ENCODE measurements at regions of chr19 and their contacts with region 1.

Region 1: GRCh38 chr19:35375505-35376307 is 4.8 kb downstream of the GPR42 start:
- DNase-seq: no peak
- ATAC-seq: peak; percentile 36; the same call in 2 of the 3 replicates
- H3K4me3 ChIP-seq: no peak overlapping the region
- H3K27ac ChIP-seq: peak overlapping the region; percentile 51; the same call in 1 of the 2 replicates
- H3K4me1 ChIP-seq: peaks cover 31% of the 10 kb centered on the region
- H3K27me3 ChIP-seq: no peaks in the 10 kb centered on the region
- CTCF ChIP-seq: no peak
- EP300 ChIP-seq: no peak
- POLR2A ChIP-seq: no peak
- RAD21 ChIP-seq: no peak

Region 2: DNA sequence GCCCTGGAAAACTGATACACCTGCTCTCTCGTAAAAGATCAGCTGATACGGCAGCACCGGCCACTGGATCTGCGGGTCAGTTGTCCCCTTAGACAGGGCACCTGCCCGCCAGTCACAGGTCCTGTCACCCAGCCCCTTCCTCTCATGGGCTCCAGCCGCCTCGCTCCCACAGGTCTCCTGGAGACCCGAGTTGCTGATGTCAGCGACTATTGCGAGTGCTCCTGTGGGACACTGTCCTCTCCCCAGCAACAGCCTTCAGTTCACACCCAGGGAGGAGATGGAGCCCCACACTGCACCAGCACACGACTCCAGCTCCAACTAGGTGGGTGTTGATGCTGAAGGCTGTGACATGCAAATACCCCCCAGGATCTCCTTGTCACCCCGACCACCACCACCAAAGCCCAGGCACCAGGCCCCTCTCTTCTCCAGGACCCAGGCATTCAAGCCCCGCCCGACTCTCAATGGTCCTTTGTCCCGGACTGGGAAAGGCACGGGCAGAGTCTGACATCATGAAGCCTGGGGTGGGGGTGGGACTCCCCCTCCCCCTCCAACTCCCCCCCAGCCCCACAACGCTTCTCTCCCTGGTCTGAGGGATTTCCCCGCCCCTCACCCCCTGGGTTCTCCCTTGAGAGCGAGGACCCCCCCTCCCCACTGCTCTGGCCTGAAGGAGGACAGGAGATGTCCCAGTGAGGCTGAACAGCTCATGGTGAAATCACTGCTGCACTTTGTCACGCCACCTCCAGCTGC is 85.2 kb before region 1 on chr19:
- CTCF ChIA-PET with region 1: no interaction called
- POLR2A ChIA-PET with region 1: no interaction called
- RAD21 ChIA-PET with region 1: no interaction called
- SMC1A ChIA-PET with region 1: no interaction called
- in situ Hi-C with region 1: no loop called
- intact Hi-C with region 1: no loop called
- DNase-seq: no peak
- ATAC-seq: no peak
- H3K4me3 ChIP-seq: no peak overlapping the region
- H3K27ac ChIP-seq: no peak overlapping the region
- H3K4me1 ChIP-seq: peaks cover 1% of the 10 kb centered on the region
- H3K27me3 ChIP-seq: no peaks in the 10 kb centered on the region; a peak in 1 of 4 replicates
- CTCF ChIP-seq: no peak
- EP300 ChIP-seq: no peak
- POLR2A ChIP-seq: no peak
- RAD21 ChIP-seq: no peak

Region 3: GRCh38 chr19:35388277-35389054 is 12.8 kb after region 1 on chr19:
- CTCF ChIA-PET with region 1: interaction called, 4 read pairs
- POLR2A ChIA-PET with region 1: interaction called, 10 read pairs
- RAD21 ChIA-PET with region 1: interaction called, 3 read pairs
- SMC1A ChIA-PET with region 1: interaction called, 6 read pairs
- in situ Hi-C with region 1: no loop called
- intact Hi-C with region 1: no loop called
- DNase-seq: no peak
- ATAC-seq: no peak
- H3K4me3 ChIP-seq: no peak overlapping the region
- H3K27ac ChIP-seq: no peak overlapping the region
- H3K4me1 ChIP-seq: no peaks in the 10 kb centered on the region
- H3K27me3 ChIP-seq: no peaks in the 10 kb centered on the region
- CTCF ChIP-seq: no peak
- EP300 ChIP-seq: no peak
- POLR2A ChIP-seq: no peak
- RAD21 ChIP-seq: no peak

Region 4: DNA sequence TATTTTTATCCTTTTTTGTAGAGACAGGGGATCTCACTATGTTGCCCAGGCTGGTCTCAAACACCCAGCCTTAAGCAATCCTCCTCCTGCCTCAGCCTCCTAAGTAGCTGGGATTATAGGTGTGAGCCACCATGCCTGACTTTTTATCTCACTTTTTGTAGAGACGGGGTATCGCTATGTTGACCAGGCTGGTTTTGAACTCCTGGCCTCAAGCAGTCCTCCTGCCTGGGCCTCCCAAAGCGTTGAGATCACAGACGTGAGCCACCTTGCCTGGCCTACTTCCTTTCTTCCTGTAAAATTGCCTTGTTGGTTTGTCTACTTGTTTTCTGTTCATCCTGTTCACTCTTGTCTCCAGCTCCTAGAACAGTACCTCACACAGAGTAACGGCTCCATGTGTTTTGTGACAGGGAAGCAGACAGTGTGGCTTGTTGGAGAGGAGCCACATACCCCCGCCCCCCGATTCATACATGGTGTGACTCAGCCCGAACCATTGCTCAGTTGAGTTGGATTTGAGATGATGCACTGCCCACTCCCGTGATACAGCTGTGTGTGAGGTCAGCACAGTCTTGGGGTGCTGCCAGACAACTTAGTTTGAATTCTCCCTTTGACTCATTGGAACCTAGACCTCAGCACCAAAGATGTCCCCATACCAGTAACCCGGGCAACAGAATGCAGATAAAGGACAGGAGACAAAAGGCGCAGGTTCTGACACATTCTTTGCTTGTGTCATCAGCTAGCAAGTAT is 29.3 kb after region 1 on chr19:
- CTCF ChIA-PET with region 1: interaction called, 6 read pairs
- POLR2A ChIA-PET with region 1: interaction called, 35 read pairs
- RAD21 ChIA-PET with region 1: interaction called, 51 read pairs
- SMC1A ChIA-PET with region 1: interaction called, 110 read pairs
- in situ Hi-C with region 1: no loop called
- intact Hi-C with region 1: loop called (anchors 1 kb)
- DNase-seq: peak; percentile 95
- ATAC-seq: peak; percentile 80
- H3K4me3 ChIP-seq: no peak overlapping the region
- H3K27ac ChIP-seq: peak overlapping the region; percentile 79
- H3K4me1 ChIP-seq: peaks cover 57% of the 10 kb centered on the region
- H3K27me3 ChIP-seq: no peaks in the 10 kb centered on the region
- CTCF ChIP-seq: no peak
- EP300 ChIP-seq: peak; percentile 90
- POLR2A ChIP-seq: no peak
- RAD21 ChIP-seq: no peak